Gastrocnemius medialis (tissue), 4 donors: ENCODE measurements at regions of chr6 and their contacts with region 1.

Region 1: DNA sequence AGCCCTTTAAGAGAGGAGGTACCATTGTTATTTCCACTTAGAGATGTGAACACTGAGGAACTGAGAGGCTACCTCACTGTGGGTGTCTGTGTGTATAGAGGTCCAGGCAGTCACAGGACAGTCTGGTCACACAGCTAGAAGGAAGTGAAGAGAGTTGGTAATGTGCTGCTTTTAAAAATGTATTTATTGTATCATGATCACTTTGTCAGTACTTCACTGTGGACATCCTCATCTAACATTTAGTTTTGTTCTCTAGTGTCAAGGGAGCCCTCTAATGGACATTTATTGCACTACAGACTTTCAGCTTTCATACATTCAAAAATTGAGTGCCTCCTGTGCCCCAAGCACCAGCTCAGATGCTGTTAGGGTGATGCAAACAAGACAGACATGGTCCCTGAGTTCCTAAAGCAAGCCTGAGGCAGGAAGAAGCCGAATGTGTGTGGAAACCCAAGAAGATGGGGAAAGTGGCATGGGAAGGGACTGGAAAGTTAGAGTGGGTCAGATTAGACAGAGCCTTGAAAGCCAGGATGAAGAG is 123.0 kb downstream of the SLC16A10 start:
- DNase-seq: no peak
- ATAC-seq: peak; percentile 34 to 71
- H3K4me3 ChIP-seq: no peak overlapping the region
- H3K27ac ChIP-seq: peak overlapping the region; percentile 67 to 72 (median 68)
- H3K4me1 ChIP-seq: peaks cover 27 to 36% of the 10 kb centered on the region in 2 donors
- H3K27me3 ChIP-seq: no peaks in the 10 kb centered on the region
- CTCF ChIP-seq: peak; percentile 30 to 67 (median 58)
- POLR2A ChIP-seq: no peak

Region 2: GRCh38 chr6:110528101-110528929 is 681.9 kb before region 1 on chr6:
- in situ Hi-C with region 1: loop called in 1 of 4 experiments (anchors 25 kb)
- intact Hi-C with region 1: no loop called
- DNase-seq: no peak
- ATAC-seq: peak; percentile 66 to 78
- H3K4me3 ChIP-seq: no peak overlapping the region
- H3K27ac ChIP-seq: peak overlapping the region in 1 of 4 donors; percentile 15
- H3K4me1 ChIP-seq: peaks cover 0 to 3% of the 10 kb centered on the region in 2 donors
- H3K27me3 ChIP-seq: no peaks in the 10 kb centered on the region
- CTCF ChIP-seq: peak; percentile 53 to 68 (median 61)
- POLR2A ChIP-seq: no peak

Region 3: GRCh38 chr6:111011360-111012142 is 198.7 kb before region 1 on chr6:
- in situ Hi-C with region 1: no loop called
- intact Hi-C with region 1: loop called (anchors 1 kb)
- DNase-seq: no peak
- ATAC-seq: peak; percentile 42 to 81
- H3K4me3 ChIP-seq: no peak overlapping the region
- H3K27ac ChIP-seq: peak overlapping the region in 1 of 4 donors; percentile 29
- H3K4me1 ChIP-seq: peaks cover 18% of the 10 kb centered on the region in 2 donors
- H3K27me3 ChIP-seq: no peaks in the 10 kb centered on the region
- CTCF ChIP-seq: peak; percentile 33 to 63 (median 58)
- POLR2A ChIP-seq: no peak

Region 4: GRCh38 chr6:111030008-111031007 is 180.0 kb before region 1 on chr6:
- in situ Hi-C with region 1: no loop called
- intact Hi-C with region 1: loop called (anchors 2 kb)
- DNase-seq: peak; percentile 56 to 78
- ATAC-seq: peak; percentile 90 to 97
- H3K4me3 ChIP-seq: peak overlapping the region in 1 of 4 donors; percentile 14
- H3K27ac ChIP-seq: peak overlapping the region; percentile 39 to 81 (median 72)
- H3K4me1 ChIP-seq: peaks cover 39 to 52% of the 10 kb centered on the region in 2 donors
- H3K27me3 ChIP-seq: no peaks in the 10 kb centered on the region
- CTCF ChIP-seq: no peak
- POLR2A ChIP-seq: no peak

Region 5: GRCh38 chr6:111057074-111057752 is 153.0 kb before region 1 on chr6:
- in situ Hi-C with region 1: loop called (anchors 5 to 25 kb)
- intact Hi-C with region 1: loop called (anchors 2 kb)
- DNase-seq: no peak
- ATAC-seq: peak; percentile 86 to 92
- H3K4me3 ChIP-seq: no peak overlapping the region
- H3K27ac ChIP-seq: no peak overlapping the region
- H3K4me1 ChIP-seq: no peaks in the 10 kb centered on the region
- H3K27me3 ChIP-seq: no peaks in the 10 kb centered on the region
- CTCF ChIP-seq: peak; percentile 64 to 80 (median 69)
- POLR2A ChIP-seq: no peak

Region 6: DNA sequence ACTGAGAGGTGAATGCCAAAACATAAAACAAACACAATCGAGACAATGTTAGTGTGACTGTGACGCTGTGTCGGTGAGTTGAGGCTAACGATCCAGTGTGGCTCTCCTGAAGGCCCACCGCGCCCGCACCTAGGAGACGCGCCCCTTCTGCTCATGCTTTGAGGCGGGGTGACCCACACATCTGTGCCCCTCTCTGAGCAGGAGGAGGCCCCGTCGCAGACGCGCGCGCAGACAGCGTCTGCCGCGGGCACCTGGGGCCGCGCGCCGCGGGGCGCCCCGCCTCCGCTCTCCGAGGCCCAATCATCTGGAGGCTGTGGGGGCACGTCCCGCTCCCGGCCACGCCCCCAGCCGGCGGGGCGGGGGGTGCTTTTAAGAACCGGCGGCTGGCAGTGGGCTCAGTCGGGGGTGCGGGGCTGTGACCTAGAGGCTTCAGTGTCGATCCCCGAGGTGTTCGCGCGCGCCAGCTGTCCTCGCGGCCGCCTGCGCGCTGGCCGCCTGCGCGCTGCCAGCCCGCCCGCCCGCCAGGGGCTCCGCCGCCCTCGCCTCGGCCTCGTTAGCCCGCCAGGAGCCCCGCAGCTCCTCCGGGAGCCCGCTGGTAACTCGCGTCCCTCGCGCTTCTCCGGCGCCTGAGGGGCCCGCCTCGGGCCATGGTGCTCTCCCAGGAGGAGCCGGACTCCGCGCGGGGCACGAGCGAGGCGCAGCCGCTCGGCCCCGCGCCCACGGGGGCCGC is 123.0 kb before region 1 on chr6 and contains the start of gene SLC16A10:
- in situ Hi-C with region 1: no loop called
- intact Hi-C with region 1: loop called (anchors 10 kb)
- DNase-seq: peak; percentile 79 to 93
- ATAC-seq: peak; percentile 67 to 81
- H3K4me3 ChIP-seq: peak within 1 kb of the TSS; percentile 78 to 97 (median 80)
- H3K27ac ChIP-seq: peak within 1 kb of the TSS; percentile 83 to 96 (median 86)
- H3K4me1 ChIP-seq: peaks cover 18 to 26% of the 10 kb centered on the region in 2 donors
- H3K27me3 ChIP-seq: no peaks in the 10 kb centered on the region
- CTCF ChIP-seq: peak in 3 of 5 experiments; percentile 18 to 26 (median 20)
- POLR2A ChIP-seq: peak; percentile 98 to 99
- total RNA-seq, gene SLC16A10: 81.5 to 167 (median 144) TPM

Region 7: GRCh38 chr6:111122458-111123286 is 87.6 kb before region 1 on chr6:
- in situ Hi-C with region 1: no loop called
- intact Hi-C with region 1: loop called (anchors 5 kb)
- DNase-seq: peak; percentile 75 to 80
- ATAC-seq: peak; percentile 79 to 82
- H3K4me3 ChIP-seq: peak overlapping the region; percentile 21 to 48 (median 40)
- H3K27ac ChIP-seq: peak overlapping the region; percentile 88 to 98 (median 92)
- H3K4me1 ChIP-seq: peaks cover 36 to 60% of the 10 kb centered on the region in 2 donors
- H3K27me3 ChIP-seq: no peaks in the 10 kb centered on the region
- CTCF ChIP-seq: no peak
- POLR2A ChIP-seq: peak; percentile 29 to 38